ENCODE measurements at regions of chr2 and their contacts with region 1.

Region 1: DNA sequence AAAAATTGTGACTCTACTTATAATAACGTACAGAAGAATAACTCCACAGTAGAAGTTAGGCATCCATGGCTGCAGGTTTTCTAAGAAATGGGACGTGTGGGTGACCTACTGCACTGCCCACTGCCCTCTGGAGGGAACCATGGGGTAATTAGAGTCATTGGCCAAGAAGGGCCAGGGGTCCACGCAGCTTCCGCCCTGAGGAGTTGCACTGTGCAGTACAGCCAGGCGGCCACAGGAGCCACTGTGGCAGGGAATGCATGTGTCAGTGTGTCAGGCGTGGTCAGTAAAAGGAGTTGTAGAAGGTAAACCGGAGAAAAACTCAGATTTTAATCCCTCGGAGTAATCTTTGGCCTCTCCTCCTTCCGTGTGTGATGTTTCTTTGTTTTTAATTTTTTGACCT is 24.8 kb downstream of the NCK2 start:
- DNase-seq: no peak
- H3K4me3 Mint-ChIP-seq: peak overlapping the region; percentile 53
- H3K27ac Mint-ChIP-seq: peak overlapping the region; percentile 92
- H3K4me1 Mint-ChIP-seq: peaks cover 73% of the 10 kb centered on the region
- H3K27me3 Mint-ChIP-seq: no peaks in the 10 kb centered on the region

Region 2: DNA sequence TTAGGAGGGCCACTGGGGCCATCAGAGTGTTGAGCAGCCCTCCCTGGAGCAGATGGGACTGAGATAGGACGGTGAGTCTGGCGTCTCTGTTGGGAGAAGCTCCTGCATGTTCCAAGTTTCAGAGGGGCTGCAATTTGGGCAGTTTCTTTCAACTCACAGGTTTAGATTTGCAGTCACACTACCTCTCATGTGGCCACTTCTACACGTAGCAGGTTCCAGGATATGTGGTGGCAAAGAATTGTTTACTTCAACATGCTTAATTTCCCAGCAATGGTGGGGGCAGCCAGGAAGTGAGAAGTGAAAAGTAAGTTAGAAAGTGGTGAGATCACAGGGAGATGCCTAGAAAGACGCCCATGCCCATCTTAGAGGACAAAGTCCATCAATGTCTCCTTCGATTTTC is 15.5 kb before region 1 on chr2:
- intact Hi-C with region 1: loop called (anchors 2 kb)
- DNase-seq: peak; percentile 90
- H3K4me3 Mint-ChIP-seq: peak overlapping the region; percentile 70
- H3K27ac Mint-ChIP-seq: peak overlapping the region; percentile 90
- H3K4me1 Mint-ChIP-seq: peaks cover 87% of the 10 kb centered on the region
- H3K27me3 Mint-ChIP-seq: no peaks in the 10 kb centered on the region

Region 3: GRCh38 chr2:105782123-105782522 is 12.6 kb after region 1 on chr2:
- intact Hi-C with region 1: loop called (anchors 2 kb)
- DNase-seq: no peak
- H3K4me3 Mint-ChIP-seq: peak overlapping the region; percentile 17
- H3K27ac Mint-ChIP-seq: peak overlapping the region; percentile 31
- H3K4me1 Mint-ChIP-seq: peaks cover 77% of the 10 kb centered on the region
- H3K27me3 Mint-ChIP-seq: no peaks in the 10 kb centered on the region